Activated naive CD8-positive, alpha-beta T cell treated with anti-CD3 and anti-CD28 coated beads, Interleukin-2, amount 10 ng/mL, durations not matched to agents 7 days and 5 days (primary cell): ENCODE measurements at regions of chr17 and their contacts with region 1.

Region 1: GRCh38 chr17:77437017-77437416 is 296.2 kb downstream of the SEC14L1 start:
- DNase-seq: no peak
- ATAC-seq: no peak
- H3K4me3 Mint-ChIP-seq: peak overlapping the region; percentile 93
- H3K27ac Mint-ChIP-seq: peak overlapping the region; percentile 93
- H3K4me1 Mint-ChIP-seq: peaks cover 72% of the 10 kb centered on the region
- H3K27me3 Mint-ChIP-seq: no peaks in the 10 kb centered on the region

Region 2: DNA sequence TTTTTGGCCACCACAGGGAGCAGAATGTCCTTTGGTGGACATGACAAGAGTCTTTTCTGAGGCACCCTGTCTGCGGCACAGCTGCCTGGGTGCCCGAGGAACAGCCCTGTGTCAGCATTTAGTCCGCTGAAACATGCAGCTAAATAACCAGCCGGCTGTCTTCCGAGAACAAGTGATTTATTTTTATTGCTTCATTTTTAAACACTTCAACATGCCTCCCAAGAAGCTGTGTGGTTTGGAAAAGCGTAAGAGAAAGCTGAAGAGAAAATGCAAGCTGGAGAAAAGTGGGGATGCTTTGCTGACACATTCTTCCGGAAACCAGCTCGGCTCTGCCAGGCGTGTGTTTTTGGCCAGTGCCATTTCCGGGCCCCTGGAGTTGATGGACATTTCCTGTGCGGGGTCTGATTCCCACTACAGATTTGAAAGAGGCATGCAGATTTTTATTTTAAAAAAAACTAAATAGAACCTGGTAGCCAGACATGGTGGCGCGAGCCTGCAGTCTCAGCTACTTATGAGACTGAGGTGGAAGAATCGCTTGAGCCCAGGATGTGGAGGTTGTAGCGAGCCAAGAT is 201.6 kb before region 1 on chr17:
- POLR2A ChIA-PET with region 1: no interaction called
- DNase-seq: peak; percentile 54
- ATAC-seq: peak; percentile 78
- H3K4me3 Mint-ChIP-seq: peak overlapping the region; percentile 81
- H3K27ac Mint-ChIP-seq: peak overlapping the region; percentile 88
- H3K4me1 Mint-ChIP-seq: peaks cover 24% of the 10 kb centered on the region
- H3K27me3 Mint-ChIP-seq: no peaks in the 10 kb centered on the region

Region 3: DNA sequence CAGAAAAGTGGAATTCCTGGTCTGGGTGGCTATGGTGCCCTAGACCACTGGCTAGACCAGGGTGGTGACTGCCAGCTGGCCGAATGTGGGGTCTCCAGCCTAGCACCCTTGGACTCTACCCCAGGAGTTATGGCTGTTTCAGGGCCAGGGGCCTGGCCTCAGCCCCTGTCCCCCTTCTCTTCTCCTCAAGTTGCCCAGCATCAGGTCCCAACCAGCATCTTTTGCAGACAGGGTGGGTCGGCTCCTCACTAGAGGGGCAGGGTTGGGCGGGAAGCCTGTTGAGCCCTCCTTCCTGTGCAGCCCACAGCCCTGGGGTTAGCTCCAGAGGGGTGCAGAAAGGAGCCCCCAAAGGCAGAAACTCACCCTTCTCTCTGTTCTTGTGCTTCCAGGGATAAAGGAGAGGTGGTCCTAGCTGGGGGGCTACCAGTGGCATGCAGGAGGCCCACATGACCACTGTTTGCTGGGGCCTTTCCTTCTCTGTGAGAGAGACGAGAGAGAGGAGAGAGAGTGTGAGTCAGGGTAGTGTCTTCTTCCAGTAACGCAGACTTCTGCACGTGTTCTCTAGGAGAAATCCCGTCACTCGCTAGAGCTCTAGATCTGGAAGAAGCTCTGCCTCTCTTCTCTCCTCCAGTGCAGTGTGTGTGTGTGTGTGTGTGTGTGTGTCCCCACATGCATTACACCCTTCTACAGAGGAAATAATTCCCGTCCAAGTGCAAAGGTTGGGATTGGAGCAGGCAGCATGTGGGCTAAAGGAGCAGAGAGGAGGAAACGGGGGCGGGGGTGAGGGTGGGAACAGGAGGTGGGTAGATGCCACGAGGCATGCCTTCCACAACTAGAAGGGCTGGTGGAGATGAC is 86.8 kb before region 1 on chr17:
- POLR2A ChIA-PET with region 1: no interaction called
- DNase-seq: peak; percentile 15
- ATAC-seq: no peak
- H3K4me3 Mint-ChIP-seq: no peak overlapping the region
- H3K27ac Mint-ChIP-seq: peak overlapping the region; percentile 67
- H3K4me1 Mint-ChIP-seq: peaks cover 18% of the 10 kb centered on the region
- H3K27me3 Mint-ChIP-seq: peaks cover 1% of the 10 kb centered on the region

Region 4: DNA sequence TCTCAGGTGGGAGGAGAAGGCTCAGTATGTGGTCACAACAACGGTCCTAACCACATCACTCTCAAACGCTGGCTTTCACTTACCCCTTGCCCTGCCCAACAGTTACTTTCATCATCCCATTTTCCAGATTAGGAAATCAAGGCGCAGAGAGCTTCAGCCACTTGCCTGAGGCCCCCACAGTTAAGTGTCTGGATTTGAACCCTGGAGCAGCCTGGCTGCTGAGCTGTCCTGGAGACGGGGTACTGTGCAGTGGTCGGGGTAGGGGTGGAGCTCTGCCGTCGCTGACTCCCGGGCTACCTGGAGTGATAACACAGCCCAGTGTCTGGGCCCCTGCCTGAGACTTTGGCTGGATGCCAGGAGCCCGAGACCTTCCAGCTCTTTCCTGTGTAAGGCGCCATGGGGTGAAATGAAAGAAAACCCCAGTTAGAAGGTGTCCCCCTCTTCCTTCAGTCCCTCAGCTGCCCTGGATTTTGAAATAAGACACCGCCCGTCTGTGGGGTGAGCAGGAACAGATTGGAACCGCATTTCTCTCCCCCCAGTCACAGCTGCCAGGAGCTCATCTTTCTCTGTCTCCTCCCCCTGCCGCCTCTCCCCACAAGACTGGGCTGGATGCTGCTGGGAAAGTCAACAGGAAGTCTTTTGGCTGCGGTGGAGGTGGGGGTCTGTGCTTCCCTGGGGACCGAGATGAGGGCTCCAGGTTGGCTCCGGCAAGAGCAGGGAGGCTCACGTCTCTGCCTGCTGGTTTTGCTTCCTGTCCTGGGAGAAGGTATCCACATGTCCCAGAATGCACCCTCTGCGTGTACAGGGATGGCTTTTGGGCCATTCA is 16.0 kb before region 1 on chr17:
- POLR2A ChIA-PET with region 1: interaction called, 20 read pairs
- DNase-seq: peak; percentile 64
- ATAC-seq: peak; percentile 48
- H3K4me3 Mint-ChIP-seq: peak overlapping the region; percentile 80
- H3K27ac Mint-ChIP-seq: peak overlapping the region; percentile 89
- H3K4me1 Mint-ChIP-seq: peaks cover 37% of the 10 kb centered on the region
- H3K27me3 Mint-ChIP-seq: no peaks in the 10 kb centered on the region